Dorsolateral prefrontal cortex (tissue), 120 donors: ENCODE measurements at regions of chr11 and their contacts with region 1.

Region 1: DNA sequence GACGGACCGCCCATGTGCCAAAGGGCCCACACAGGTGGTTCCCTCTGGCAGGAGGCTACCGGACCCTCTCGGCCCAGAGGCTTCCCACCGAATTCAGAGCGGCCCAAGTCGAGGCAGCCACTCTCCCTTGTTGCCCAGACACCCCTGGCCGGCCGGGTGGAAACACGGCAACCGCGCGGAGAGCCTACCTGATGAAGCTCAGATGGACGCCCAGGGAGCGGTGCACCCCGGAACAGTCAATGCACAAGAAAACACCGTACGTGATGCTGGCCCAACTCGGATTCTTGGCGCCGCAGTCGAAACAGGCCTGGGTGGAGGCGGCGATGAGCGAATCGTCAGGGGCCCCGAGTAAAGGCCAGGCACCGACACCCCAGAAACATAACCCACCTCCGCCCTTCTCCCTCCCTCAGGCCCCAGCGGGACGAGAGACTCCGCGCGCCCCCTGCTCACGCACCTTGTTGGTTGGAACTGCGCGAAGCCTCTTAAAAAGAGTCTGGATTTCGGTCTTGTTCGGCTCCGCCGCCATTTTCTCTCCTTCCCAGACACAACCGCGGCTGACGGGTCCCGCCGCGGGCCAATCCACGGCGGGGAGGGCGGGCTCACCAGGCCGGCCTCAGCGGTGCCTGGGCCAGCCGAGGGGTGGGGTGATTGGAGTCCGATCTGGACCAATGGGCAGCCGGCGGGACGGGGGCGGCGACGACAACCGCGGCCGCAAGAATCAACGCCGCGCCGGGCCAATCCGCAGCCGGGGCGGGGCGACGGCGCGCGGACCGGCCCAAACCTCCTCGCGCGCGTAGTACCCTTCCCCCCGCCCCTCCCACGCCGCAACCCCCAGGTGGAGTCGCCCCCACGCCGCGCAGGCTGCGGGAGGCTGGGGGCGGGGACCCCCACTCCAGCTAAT is at the start of gene ARFGAP2:
- DNase-seq: peak; percentile 96 to 99 (median 98)
- H3K4me3 ChIP-seq: peak within 1 kb of the TSS; percentile 67 to 100 (median 96)
- H3K27ac ChIP-seq: peak within 1 kb of the TSS; percentile 97 to 100 (median 100)
- H3K27me3 ChIP-seq: no peaks in the 10 kb centered on the region
- CTCF ChIP-seq: peak in 1 of 56 donors; percentile 24
- total RNA-seq, gene ARFGAP2: 84.8 to 149 (median 114) TPM

Region 2: GRCh38 chr11:47213985-47214564 is 37.5 kb after region 1 on chr11:
- intact Hi-C with region 1: loop called (anchors 1 kb)
- DNase-seq: peak; percentile 93 to 98 (median 97)
- H3K4me3 ChIP-seq: peak overlapping the region; percentile 46 to 92 (median 75)
- H3K27ac ChIP-seq: peak overlapping the region; percentile 82 to 100 (median 98)
- H3K27me3 ChIP-seq: no peaks in the 10 kb centered on the region
- CTCF ChIP-seq: peak in 13 of 56 donors; percentile 3 to 36 (median 17)

Region 3: DNA sequence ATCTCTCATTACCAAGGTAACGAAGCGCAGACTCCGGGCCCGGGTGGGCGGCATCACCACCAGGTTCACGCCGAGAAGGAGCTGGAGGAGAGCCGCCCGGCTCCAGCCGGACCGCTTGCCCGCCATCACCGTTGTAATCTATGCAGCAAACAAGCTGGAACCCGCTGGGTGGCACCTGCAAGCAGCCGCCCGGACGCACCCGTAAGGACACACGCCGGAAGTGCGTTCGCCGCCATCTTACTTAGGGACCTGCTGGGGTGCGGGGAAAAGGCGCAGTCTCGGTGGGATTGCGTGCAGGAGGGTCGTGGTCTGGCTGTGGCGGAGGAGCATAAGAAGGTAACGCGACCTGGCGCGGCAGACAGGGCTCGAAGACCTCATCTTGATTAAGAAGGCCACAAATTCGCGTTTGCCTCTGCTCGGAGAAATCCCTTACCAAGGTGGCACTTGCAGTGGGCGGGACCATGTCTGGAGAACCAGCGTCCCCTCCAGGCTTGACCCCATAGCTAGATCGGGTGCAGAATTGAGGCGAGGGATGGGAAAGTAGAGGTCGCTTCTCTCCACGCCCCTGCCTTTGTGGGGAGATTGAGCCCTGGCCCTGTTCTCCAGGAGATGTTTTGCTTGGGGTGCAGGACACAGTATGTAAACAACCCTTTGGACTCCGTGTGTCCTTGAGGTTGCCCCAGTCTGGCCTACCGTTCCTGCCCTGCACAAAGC is 72.2 kb after region 1 on chr11 and contains the start of gene ACP2:
- intact Hi-C with region 1: loop called (anchors 2 kb)
- DNase-seq: peak; percentile 85 to 95 (median 93)
- H3K4me3 ChIP-seq: peak within 1 kb of the TSS; percentile 64 to 96 (median 87)
- H3K27ac ChIP-seq: peak within 1 kb of the TSS; percentile 32 to 97 (median 91)
- H3K27me3 ChIP-seq: no peaks in the 10 kb centered on the region
- CTCF ChIP-seq: peak in 49 of 56 donors; percentile 7 to 71 (median 42)
- total RNA-seq, gene ACP2: 23.3 to 58.3 (median 37.1) TPM

Region 4: DNA sequence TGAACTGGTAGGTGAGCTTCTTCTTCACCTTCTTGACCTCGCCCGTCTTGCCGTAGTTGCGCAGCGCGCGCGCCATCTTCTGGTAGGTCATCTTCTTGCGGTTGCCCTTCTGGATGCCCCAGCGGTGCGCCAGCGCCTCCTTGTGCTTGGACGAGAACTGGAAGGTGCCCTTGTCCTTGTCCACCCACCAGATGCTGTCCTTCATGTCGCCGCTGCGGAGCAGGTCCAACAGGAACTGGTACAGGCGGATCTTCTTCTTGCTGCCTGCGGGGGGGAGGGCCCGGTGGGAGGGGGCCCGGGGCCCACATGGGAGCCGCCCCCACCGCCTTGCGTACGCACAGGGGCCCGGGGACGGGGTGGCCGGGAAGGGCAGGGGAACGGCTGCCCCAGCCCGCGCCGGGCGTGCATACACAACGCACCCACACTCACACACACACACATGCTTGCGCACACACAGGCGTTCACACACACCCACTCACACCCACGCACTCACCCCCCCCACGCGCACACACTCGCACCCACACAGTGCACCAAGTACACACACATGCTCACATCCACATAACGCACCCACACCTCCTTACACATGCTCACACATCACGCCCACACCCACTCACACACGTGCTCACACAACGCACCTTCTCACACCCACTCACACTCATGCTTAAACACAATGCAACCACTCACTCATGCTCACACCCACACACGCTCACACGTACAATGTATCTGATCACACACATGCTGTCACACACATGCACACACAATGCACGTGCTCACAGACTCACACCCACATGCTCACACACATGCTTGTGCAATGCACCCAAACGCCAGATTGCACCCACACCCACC is 178.9 kb after region 1 on chr11:
- intact Hi-C with region 1: loop called (anchors 2 kb)
- DNase-seq: peak; percentile 88 to 94 (median 92)
- H3K4me3 ChIP-seq: peak overlapping the region; percentile 49 to 80 (median 65)
- H3K27ac ChIP-seq: peak overlapping the region in 40 of 59 donors; percentile 16 to 83 (median 62)
- H3K27me3 ChIP-seq: no peaks in the 10 kb centered on the region
- CTCF ChIP-seq: peak; percentile 36 to 98 (median 90)

Region 5: DNA sequence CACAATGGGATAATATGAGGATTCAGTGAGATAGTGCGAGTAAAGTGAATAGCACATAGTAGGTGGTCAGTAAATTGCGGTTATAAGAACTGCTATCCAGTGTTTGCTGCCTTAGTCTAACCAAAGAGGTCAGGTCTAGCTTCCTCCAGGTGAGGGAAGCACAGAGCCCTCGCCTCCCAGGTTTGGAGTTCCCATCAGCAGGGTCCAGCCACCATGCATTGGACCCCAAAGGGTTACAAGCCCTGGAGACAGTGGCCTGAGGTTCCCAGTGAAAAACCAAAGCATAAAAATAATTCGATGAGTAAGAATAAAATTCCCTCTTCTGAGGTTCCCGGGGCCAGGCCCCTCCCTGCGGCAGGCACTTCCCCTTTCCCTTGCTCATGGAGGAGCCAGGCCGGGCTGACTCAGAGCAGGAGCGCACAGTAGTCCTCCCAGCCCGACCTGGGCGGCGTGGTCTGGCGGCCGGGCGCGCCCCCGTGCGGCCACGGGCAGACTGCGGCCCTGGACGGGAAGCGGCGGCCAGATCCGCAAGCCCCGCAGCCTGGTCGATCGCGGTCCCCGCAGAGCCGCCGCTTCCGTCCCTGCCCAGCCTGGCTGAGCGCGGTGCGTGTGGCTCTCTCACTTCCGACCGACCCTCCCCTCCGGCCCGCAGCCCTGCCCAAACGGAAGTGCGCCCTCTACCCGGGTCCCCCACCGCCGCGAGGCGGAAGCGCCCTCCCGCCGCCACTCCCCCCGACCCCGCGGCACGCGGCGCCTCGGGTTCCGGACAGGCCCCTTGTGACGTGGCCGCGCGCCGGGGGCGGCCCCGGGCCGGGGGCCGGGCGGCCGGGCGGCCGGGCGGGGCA is 231.4 kb after region 1 on chr11 and contains the start of gene SLC39A13:
- intact Hi-C with region 1: loop called in 1 of 2 experiments (anchors 5 kb)
- DNase-seq: peak; percentile 81 to 97 (median 92)
- H3K4me3 ChIP-seq: peak within 1 kb of the TSS; percentile 59 to 92 (median 80)
- H3K27ac ChIP-seq: peak within 1 kb of the TSS; percentile 83 to 99 (median 96)
- H3K27me3 ChIP-seq: no peaks in the 10 kb centered on the region
- CTCF ChIP-seq: peak; percentile 66 to 98 (median 86)
- total RNA-seq, gene SLC39A13: 29.5 to 62.3 (median 39.7) TPM